ENCODE measurements at regions of chr14 and their contacts with region 1.

Region 1: DNA sequence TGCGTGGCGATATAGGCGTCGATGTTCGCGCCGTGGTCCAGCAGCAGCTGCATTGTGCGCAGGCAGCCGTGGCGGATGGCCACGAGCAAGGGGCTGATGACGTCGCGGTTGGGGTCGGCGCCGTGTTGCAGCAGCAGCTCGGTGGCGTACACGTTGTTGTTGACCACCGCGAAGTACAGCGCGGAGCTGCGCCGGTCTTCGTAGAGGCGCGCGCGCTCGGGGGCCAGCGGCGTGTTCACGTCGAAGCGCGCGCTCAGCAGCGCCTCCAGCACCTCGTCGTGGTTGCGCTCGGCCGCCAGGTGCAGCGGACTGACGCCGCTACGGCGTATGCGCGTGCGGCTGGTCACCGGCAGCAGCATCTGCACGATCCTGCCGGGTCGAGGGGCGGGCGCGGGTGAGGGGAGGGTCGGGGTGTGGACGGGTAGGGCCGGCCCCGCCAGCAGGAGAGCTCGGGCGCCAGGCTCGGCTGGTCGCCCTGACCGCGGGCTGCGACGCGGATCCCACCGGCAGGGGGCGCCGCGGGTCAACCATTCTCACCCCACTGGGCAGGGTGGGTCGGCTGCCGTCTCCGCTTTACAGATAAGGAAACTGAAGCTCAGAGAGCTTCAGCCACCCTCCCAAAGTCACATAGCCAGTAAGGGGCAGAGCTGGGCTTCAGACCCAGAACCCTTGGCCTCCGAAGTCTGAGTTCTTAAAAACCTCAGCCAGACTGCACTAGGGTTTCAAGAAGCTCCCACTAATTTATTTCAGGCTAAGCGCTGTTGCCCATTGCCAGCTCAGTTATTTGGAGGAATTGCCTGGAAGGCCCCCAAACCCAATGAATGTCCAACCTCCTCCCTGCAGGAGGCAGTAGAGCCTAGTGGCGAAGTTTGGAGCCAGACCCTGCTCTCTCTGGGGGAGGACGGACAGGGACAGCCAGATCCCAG is 12.4 kb downstream of the FAM181A start:
- DNase-seq: peak; percentile 87
- H3K4me3 Mint-ChIP-seq: peak overlapping the region; percentile 64
- H3K27ac Mint-ChIP-seq: peak overlapping the region; percentile 88
- H3K4me1 Mint-ChIP-seq: peaks cover 24% of the 10 kb centered on the region
- H3K27me3 Mint-ChIP-seq: no peaks in the 10 kb centered on the region

Region 2: GRCh38 chr14:93655078-93655750 is 284.4 kb before region 1 on chr14:
- intact Hi-C with region 1: no loop called
- DNase-seq: no peak
- H3K4me3 Mint-ChIP-seq: no peak overlapping the region
- H3K27ac Mint-ChIP-seq: no peak overlapping the region
- H3K4me1 Mint-ChIP-seq: no peaks in the 10 kb centered on the region
- H3K27me3 Mint-ChIP-seq: peaks cover 8% of the 10 kb centered on the region

Region 3: GRCh38 chr14:93838238-93838637 is 101.3 kb before region 1 on chr14:
- intact Hi-C with region 1: no loop called
- DNase-seq: no peak
- H3K4me3 Mint-ChIP-seq: no peak overlapping the region
- H3K27ac Mint-ChIP-seq: no peak overlapping the region
- H3K4me1 Mint-ChIP-seq: no peaks in the 10 kb centered on the region
- H3K27me3 Mint-ChIP-seq: no peaks in the 10 kb centered on the region

Region 4: GRCh38 chr14:93950948-93951634 is 11.5 kb after region 1 on chr14:
- intact Hi-C with region 1: loop called (anchors 1 kb)
- DNase-seq: no peak
- H3K4me3 Mint-ChIP-seq: no peak overlapping the region
- H3K27ac Mint-ChIP-seq: peak overlapping the region; percentile 63
- H3K4me1 Mint-ChIP-seq: peaks cover 71% of the 10 kb centered on the region
- H3K27me3 Mint-ChIP-seq: no peaks in the 10 kb centered on the region

Region 5: DNA sequence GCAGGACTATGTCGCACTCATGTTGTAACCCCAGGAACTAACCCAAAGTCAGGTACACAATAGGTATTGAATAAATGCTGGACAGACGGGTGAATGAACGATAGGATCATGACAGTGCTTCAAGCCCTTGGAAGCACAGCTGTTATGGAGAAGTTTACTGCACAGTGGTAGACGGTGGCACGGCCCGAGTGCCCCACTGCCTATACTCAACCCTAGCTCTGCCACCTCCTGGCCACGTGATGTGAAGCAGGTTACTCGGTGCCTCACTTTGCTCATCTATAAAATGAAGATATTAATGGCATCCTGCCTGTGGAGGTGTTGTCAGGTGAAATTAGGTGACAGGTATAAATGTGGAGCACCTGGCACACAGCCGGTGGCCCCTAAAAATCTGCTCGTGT is 31.0 kb after region 1 on chr14:
- intact Hi-C with region 1: loop called (anchors 1 kb)
- DNase-seq: no peak
- H3K4me3 Mint-ChIP-seq: peak overlapping the region; percentile 84
- H3K27ac Mint-ChIP-seq: peak overlapping the region; percentile 96
- H3K4me1 Mint-ChIP-seq: peaks cover 91% of the 10 kb centered on the region
- H3K27me3 Mint-ChIP-seq: no peaks in the 10 kb centered on the region

Region 6: DNA sequence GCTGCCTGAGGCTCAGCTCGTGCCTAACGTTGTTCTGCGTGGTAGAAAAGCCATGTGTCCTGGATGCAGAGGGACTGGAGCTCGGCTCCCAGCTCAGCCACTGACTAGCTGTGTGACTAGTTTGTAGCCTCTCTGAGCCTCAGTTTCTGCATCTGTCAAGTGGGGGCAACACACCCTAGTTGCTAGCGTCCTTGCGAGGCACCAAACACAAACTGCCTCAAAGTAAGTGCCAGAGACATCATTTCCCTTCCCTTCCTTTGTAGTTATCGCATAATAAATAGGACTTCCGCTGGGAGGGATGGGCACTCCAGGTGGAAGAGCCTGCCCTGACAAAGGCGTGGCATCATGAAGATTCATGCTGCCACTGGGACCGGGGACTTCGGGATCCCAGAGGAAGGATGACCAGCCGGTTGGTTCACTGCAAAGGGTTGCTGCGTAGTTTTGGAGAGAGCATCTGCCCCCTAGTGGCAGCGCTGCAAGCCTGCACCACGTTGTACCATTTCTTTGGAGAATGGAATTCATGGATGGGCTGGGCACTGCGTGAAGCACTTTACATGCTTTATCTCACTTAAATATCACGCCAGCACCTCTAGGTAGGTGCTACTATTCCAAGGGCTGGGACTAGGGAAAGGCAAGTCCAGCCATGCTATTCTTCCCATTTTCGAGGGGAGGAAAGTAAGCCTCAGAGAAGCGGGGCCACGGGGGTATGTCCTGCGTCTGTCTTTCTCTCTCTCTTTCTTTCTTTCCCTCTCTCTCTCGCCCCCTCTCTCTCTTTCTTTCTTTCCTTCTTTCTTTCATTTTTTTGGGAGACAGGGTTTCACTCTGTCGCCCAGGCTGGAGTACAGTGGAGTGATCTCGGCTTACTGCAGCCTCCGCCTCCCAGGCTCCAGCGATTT is 62.2 kb after region 1 on chr14:
- intact Hi-C with region 1: loop called (anchors 1 kb)
- DNase-seq: peak; percentile 56
- H3K4me3 Mint-ChIP-seq: peak overlapping the region; percentile 1
- H3K27ac Mint-ChIP-seq: peak overlapping the region; percentile 36
- H3K4me1 Mint-ChIP-seq: peaks cover 39% of the 10 kb centered on the region
- H3K27me3 Mint-ChIP-seq: peaks cover 2% of the 10 kb centered on the region

Region 7: GRCh38 chr14:94136575-94137331 is 197.2 kb after region 1 on chr14:
- intact Hi-C with region 1: loop called (anchors 1 kb)
- DNase-seq: peak; percentile 72
- H3K4me3 Mint-ChIP-seq: no peak overlapping the region
- H3K27ac Mint-ChIP-seq: no peak overlapping the region
- H3K4me1 Mint-ChIP-seq: peaks cover 10% of the 10 kb centered on the region
- H3K27me3 Mint-ChIP-seq: peaks cover 24% of the 10 kb centered on the region

Measured in activated T-helper 1 cell treated with anti-CD3 and anti-CD28 coated beads, Interleukin-12 subunit alpha, Interleukin-12 subunit beta, Interleukin-2, Interleukin-4 antibody, amounts not matched to agents 30 ng/mL and 10 ng/mL and 1 ng/mL, durations not matched to agents 14 hours and 24 hours and 36 hours (primary cell).